Psoas muscle (tissue), 8 donors: ENCODE measurements at regions of chr2 and their contacts with region 1.

Region 1: DNA sequence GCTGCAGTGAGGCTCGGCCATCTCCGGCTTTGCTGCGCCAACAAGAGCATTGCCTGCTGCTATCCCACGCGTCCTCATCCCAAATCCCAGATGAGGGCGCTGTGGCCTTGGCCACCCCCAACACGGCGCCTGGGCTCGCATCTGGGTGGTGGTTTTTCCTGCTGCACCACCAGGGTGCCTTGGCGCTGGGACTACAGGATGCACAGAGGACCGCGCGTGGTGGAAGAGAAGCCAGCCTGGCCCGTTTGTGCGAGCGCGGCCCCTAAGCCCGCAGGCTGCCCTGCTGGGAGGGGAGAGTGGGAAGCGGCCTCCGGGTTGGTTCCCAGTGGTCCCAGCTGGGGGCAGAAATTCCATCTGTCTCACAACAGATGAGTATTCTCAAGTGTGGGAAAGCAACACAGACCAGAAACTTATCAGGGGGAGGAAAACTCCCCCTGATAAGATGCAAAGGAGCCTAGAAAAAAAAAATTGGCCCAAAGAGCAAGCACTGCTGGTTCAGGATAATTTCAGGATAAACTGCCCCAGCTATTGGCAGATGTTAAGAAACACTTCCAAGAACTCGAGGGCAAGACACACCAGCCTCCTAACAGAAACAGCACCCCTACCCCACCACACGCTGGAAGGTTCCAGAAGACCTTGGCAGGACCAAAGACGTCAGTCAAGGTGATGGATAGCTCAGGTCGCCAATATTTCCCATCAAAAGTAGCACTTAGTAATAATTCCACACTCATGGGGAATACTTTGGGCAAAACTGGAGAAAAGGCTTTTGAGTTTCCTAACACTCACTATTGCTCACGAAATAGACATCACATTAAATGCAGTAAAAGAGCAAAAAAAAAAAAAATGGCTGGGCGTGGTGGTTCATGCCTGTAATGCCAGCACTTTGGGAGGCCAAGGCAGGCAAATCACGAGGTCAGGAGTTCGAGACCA is 152.1 kb downstream of the PXDN start:
- DNase-seq: peak; percentile 72 to 79
- ATAC-seq: peak; percentile 47 to 82 (median 78)
- H3K4me3 ChIP-seq: no peak overlapping the region
- H3K27ac ChIP-seq: no peak overlapping the region
- H3K4me1 ChIP-seq: no peaks in the 10 kb centered on the region
- H3K27me3 ChIP-seq: peaks cover 0 to 26% (median 0%) of the 10 kb centered on the region in 3 donors
- CTCF ChIP-seq: peak; percentile 42

Region 2: GRCh38 chr2:1527153-1527992 is 64.9 kb before region 1 on chr2:
- intact Hi-C with region 1: loop called in 1 of 2 experiments (anchors 2 kb)
- DNase-seq: no peak
- ATAC-seq: no peak
- H3K4me3 ChIP-seq: no peak overlapping the region
- H3K27ac ChIP-seq: no peak overlapping the region
- H3K4me1 ChIP-seq: no peaks in the 10 kb centered on the region
- H3K27me3 ChIP-seq: no peaks in the 10 kb centered on the region
- CTCF ChIP-seq: no peak

Region 3: GRCh38 chr2:1546023-1546591 is 46.1 kb before region 1 on chr2:
- intact Hi-C with region 1: no loop called
- DNase-seq: no peak
- ATAC-seq: no peak
- H3K4me3 ChIP-seq: no peak overlapping the region
- H3K27ac ChIP-seq: no peak overlapping the region
- H3K4me1 ChIP-seq: peaks cover 5% of the 10 kb centered on the region
- H3K27me3 ChIP-seq: peaks cover 0 to 15% (median 6%) of the 10 kb centered on the region in 3 donors
- CTCF ChIP-seq: peak; percentile 59